ENCODE measurements at regions of chr5 and their contacts with region 1.

Region 1: GRCh38 chr5:108727651-108728565 is 19.8 kb upstream of the FER start:
- DNase-seq: peak; percentile 93 to 95 (median 93)
- ATAC-seq: peak; percentile 100
- H3K4me3 ChIP-seq: peak overlapping the region; percentile 40 to 95 (median 84)
- H3K27ac ChIP-seq: peak overlapping the region; percentile 72 to 95 (median 90)
- H3K4me1 ChIP-seq: peaks cover 0 to 33% (median 5%) of the 10 kb centered on the region in 12 donors
- H3K27me3 ChIP-seq: no peaks in the 10 kb centered on the region
- CTCF ChIP-seq: peak in 3 of 12 donors; percentile 10 to 38 (median 13)
- POLR2A ChIP-seq: peak in 1 of 2 donors; percentile 76

Region 2: GRCh38 chr5:108681079-108681921 is 46.6 kb before region 1 on chr5:
- intact Hi-C with region 1: loop called in 1 of 10 experiments (anchors 5 kb)
- DNase-seq: peak in 2 of 5 donors; percentile 18 to 30
- ATAC-seq: peak; percentile 81 to 97 (median 86)
- H3K4me3 ChIP-seq: peak overlapping the region in 4 of 12 donors; percentile 7 to 34 (median 26)
- H3K27ac ChIP-seq: peak overlapping the region in 4 of 12 donors; percentile 20 to 61 (median 38)
- H3K4me1 ChIP-seq: peaks cover 0 to 5% (median 0%) of the 10 kb centered on the region in 12 donors
- H3K27me3 ChIP-seq: no peaks in the 10 kb centered on the region
- CTCF ChIP-seq: peak; percentile 62 to 89 (median 81)
- POLR2A ChIP-seq: no peak

Region 3: DNA sequence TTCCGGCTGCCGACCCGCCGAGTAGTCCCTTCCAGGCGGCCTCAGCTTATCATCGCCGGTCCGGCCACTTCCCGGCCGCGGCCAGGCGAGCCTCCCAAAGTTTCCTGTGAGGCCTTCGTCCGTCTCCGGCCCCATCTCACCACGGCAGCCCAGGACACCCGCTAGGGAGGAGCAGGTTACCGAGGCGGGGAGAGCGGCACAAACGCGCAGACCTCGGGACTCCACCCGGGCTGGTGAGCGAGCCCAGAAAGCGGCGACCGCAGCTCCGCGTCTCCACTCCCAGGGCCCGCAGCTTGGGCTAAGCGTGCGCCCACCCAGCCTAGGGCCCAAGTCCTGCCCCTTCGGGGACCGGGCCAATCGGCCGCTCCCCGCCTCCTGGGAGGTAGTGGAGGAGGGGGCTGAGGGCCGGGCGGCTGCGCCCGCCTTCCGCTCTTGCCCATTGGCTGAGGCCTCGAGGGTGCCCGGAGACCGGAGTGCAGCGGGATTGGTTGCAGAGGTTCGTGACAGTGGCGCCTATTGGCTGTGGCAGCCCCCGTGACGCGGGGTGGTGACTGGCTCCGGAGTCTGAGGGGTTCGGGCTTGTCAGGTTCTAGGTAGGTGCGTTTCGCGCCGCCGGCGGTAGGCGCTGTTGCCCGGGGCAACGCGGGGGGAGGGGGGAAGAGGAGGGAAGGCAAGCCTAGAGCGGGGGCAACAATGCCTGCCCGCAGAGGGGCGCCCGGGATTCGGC is 20.7 kb after region 1 on chr5:
- intact Hi-C with region 1: loop called in 4 of 10 experiments (anchors 1 to 2 kb)
- DNase-seq: peak; percentile 99 to 100 (median 99)
- ATAC-seq: peak; percentile 98 to 99 (median 98)
- H3K4me3 ChIP-seq: peak overlapping the region; percentile 83 to 98 (median 91)
- H3K27ac ChIP-seq: peak overlapping the region; percentile 91 to 100 (median 97)
- H3K4me1 ChIP-seq: peaks cover 0 to 31% (median 8%) of the 10 kb centered on the region in 12 donors
- H3K27me3 ChIP-seq: no peaks in the 10 kb centered on the region
- CTCF ChIP-seq: peak in 7 of 12 donors; percentile 17 to 34 (median 21)
- POLR2A ChIP-seq: peak; percentile 89 to 99